Activated CD4-positive, alpha-beta memory T cell treated with anti-CD3 and anti-CD28 coated beads for 36 hours (primary cell): ENCODE measurements at regions of chr16 and their contacts with region 1.

Region 1: GRCh38 chr16:89860747-89861304 is 12.6 kb upstream of the TCF25 start:
- DNase-seq: peak; percentile 83
- H3K4me3 Mint-ChIP-seq: no peak overlapping the region
- H3K27ac Mint-ChIP-seq: peak overlapping the region; percentile 47
- H3K4me1 Mint-ChIP-seq: peaks cover 25% of the 10 kb centered on the region
- H3K27me3 Mint-ChIP-seq: no peaks in the 10 kb centered on the region

Region 2: GRCh38 chr16:89700100-89700648 is 160.7 kb before region 1 on chr16:
- CTCF ChIA-PET with region 1: interaction called, 81 read pairs
- POLR2A ChIA-PET with region 1: no interaction called
- intact Hi-C with region 1: loop called (anchors 2 kb)
- DNase-seq: peak; percentile 98
- H3K4me3 Mint-ChIP-seq: peak overlapping the region; percentile 72
- H3K27ac Mint-ChIP-seq: peak overlapping the region; percentile 23
- H3K4me1 Mint-ChIP-seq: peaks cover 22% of the 10 kb centered on the region
- H3K27me3 Mint-ChIP-seq: no peaks in the 10 kb centered on the region

Region 3: GRCh38 chr16:89711601-89712273 is 149.1 kb before region 1 on chr16:
- CTCF ChIA-PET with region 1: interaction called, 54 read pairs
- POLR2A ChIA-PET with region 1: no interaction called
- intact Hi-C with region 1: no loop called
- DNase-seq: peak; percentile 86
- H3K4me3 Mint-ChIP-seq: peak overlapping the region; percentile 74
- H3K27ac Mint-ChIP-seq: no peak overlapping the region
- H3K4me1 Mint-ChIP-seq: peaks cover 2% of the 10 kb centered on the region
- H3K27me3 Mint-ChIP-seq: no peaks in the 10 kb centered on the region

Region 4: DNA sequence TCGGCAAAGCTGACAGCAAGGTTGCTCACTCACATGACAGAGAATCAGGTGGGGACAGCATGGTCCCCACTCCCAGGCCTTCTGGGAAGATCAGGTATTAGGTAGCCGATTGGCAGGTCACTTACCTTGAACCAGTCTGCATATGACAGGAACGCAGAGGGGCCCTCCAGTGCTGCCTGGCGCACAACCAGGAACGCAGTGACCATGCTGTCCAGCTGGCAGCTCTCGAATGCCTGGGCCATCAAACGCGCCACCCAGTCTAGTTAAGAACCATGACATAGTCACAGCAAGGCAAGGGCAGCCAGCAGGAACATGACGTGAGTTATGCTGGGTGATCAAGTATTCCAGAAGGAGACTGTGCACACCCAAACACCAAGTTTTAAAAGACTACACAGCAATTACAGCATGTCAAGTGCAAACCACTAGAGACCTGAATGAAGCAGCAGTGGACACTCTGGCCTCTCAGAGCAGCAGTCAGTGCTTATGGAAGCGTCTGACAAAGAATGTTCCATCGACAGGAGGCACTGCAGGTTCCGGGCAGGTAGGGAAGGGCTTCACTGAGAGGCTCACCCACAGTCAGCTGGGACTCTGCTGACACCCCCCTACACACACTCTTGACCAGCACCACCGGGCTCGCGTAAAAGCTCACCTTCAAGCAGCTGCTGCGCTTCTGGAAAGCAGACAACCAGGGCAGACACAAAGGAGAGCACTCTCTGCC is 69.4 kb before region 1 on chr16:
- CTCF ChIA-PET with region 1: interaction called, 22 read pairs
- POLR2A ChIA-PET with region 1: no interaction called
- intact Hi-C with region 1: no loop called
- DNase-seq: no peak
- H3K4me3 Mint-ChIP-seq: no peak overlapping the region
- H3K27ac Mint-ChIP-seq: no peak overlapping the region
- H3K4me1 Mint-ChIP-seq: peaks cover 6% of the 10 kb centered on the region
- H3K27me3 Mint-ChIP-seq: no peaks in the 10 kb centered on the region

Region 5: DNA sequence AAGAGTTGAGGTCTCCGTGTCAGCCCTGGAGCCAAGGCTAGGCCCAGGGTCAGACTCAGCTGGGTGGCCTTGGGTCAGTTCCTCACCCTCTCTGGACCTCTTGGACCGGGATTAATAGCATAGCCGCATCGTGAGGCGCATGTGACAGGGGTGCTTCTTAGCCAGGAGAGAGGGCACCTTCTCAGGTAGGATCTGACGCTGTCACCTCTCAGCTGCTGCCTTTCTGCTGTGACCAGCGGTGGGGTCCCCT is 23.6 kb before region 1 on chr16:
- CTCF ChIA-PET with region 1: interaction called, 14 read pairs
- POLR2A ChIA-PET with region 1: no interaction called
- intact Hi-C with region 1: no loop called
- DNase-seq: no peak
- H3K4me3 Mint-ChIP-seq: no peak overlapping the region
- H3K27ac Mint-ChIP-seq: no peak overlapping the region
- H3K4me1 Mint-ChIP-seq: peaks cover 17% of the 10 kb centered on the region
- H3K27me3 Mint-ChIP-seq: peaks cover 5% of the 10 kb centered on the region

Region 6: GRCh38 chr16:89909777-89910716 is 49.2 kb after region 1 on chr16:
- CTCF ChIA-PET with region 1: interaction called, 14 read pairs
- POLR2A ChIA-PET with region 1: no interaction called
- intact Hi-C with region 1: no loop called
- DNase-seq: peak; percentile 76
- H3K4me3 Mint-ChIP-seq: no peak overlapping the region
- H3K27ac Mint-ChIP-seq: no peak overlapping the region
- H3K4me1 Mint-ChIP-seq: no peaks in the 10 kb centered on the region
- H3K27me3 Mint-ChIP-seq: no peaks in the 10 kb centered on the region